ENCODE measurements at regions of chr1 and their contacts with region 1.

Region 1: DNA sequence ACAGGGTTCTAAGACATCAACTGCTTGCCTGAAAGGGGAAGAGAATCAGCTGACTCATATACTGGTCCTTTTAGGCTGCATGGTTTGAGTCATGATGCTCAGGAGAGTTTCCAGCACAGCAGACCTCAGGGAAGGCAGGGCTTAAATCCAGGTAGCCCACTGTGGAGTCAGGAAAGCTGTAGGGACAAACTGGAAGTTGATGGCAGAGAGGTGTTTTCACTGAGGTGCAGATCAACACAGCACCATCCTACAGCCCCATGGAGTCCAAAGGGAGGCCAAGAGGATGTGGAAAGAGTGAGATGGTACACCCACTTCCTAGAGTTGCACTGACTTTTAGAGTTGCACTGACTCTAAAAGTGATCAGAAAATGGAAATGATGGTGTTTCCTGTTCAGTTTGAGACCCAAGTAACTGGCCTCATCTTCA is 252.4 kb upstream of the DUSP10 start:
- DNase-seq: peak; percentile 55
- H3K4me3 Mint-ChIP-seq: no peak overlapping the region
- H3K27ac Mint-ChIP-seq: peak overlapping the region; percentile 94
- H3K4me1 Mint-ChIP-seq: peaks cover 33% of the 10 kb centered on the region
- H3K27me3 Mint-ChIP-seq: no peaks in the 10 kb centered on the region

Region 2: GRCh38 chr1:221708987-221709386 is 285.3 kb before region 1 on chr1:
- CTCF ChIA-PET with region 1: no interaction called
- intact Hi-C with region 1: loop called (anchors 1 kb)
- DNase-seq: peak; percentile 42
- H3K4me3 Mint-ChIP-seq: no peak overlapping the region
- H3K27ac Mint-ChIP-seq: no peak overlapping the region
- H3K4me1 Mint-ChIP-seq: peaks cover 53% of the 10 kb centered on the region
- H3K27me3 Mint-ChIP-seq: no peaks in the 10 kb centered on the region

Region 3: DNA sequence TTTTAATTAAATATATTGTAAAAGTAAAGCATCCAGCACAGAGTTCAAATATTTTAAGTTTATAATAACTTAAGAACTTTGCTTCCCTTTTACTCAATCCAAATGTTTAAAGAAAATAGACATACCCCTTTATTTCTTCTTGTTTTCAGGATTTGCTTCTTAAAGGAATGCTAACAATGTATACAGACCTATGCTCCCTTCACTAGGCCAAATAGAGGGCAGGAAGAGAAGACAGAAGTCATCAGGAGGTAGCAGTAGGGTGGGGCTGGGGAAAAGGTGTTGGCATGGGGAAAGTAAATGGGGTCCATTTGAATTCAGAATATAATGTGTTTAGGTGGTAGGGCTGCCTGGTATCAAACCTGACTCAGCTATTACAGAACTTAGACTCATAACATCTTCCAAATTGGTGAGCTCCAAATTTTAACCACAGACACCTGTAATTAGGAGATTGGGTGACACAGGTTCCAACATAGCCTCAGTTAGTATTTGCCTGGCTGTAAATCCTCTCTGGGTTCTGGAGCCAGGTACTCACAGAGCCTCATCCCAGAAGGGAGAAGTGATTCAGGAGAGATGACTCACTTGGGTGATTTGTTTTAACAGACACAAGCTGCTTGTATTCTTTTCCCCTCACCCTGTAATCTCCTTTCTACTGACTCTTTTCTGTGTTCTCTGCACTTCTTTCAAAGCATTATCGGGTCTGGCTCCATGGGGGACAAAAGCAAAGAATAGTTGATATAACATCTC is 192.3 kb before region 1 on chr1:
- CTCF ChIA-PET with region 1: no interaction called
- intact Hi-C with region 1: loop called (anchors 1 kb)
- DNase-seq: peak; percentile 34
- H3K4me3 Mint-ChIP-seq: no peak overlapping the region
- H3K27ac Mint-ChIP-seq: no peak overlapping the region
- H3K4me1 Mint-ChIP-seq: peaks cover 28% of the 10 kb centered on the region
- H3K27me3 Mint-ChIP-seq: no peaks in the 10 kb centered on the region

Region 4: GRCh38 chr1:221839796-221840395 is 154.4 kb before region 1 on chr1:
- CTCF ChIA-PET with region 1: no interaction called
- intact Hi-C with region 1: loop called (anchors 1 kb)
- DNase-seq: peak; percentile 87
- H3K4me3 Mint-ChIP-seq: no peak overlapping the region
- H3K27ac Mint-ChIP-seq: peak overlapping the region; percentile 9
- H3K4me1 Mint-ChIP-seq: peaks cover 35% of the 10 kb centered on the region
- H3K27me3 Mint-ChIP-seq: peaks cover 5% of the 10 kb centered on the region

Region 5: GRCh38 chr1:221961532-221962292 is 32.6 kb before region 1 on chr1:
- CTCF ChIA-PET with region 1: interaction called, 5 read pairs
- intact Hi-C with region 1: loop called (anchors 1 kb)
- DNase-seq: peak; percentile 74
- H3K4me3 Mint-ChIP-seq: no peak overlapping the region
- H3K27ac Mint-ChIP-seq: peak overlapping the region; percentile 46
- H3K4me1 Mint-ChIP-seq: peaks cover 17% of the 10 kb centered on the region
- H3K27me3 Mint-ChIP-seq: no peaks in the 10 kb centered on the region

Region 6: GRCh38 chr1:221979461-221980032 is 14.7 kb before region 1 on chr1:
- CTCF ChIA-PET with region 1: no interaction called
- intact Hi-C with region 1: no loop called
- DNase-seq: no peak
- H3K4me3 Mint-ChIP-seq: no peak overlapping the region
- H3K27ac Mint-ChIP-seq: no peak overlapping the region
- H3K4me1 Mint-ChIP-seq: no peaks in the 10 kb centered on the region
- H3K27me3 Mint-ChIP-seq: peaks cover 6% of the 10 kb centered on the region